A673 (cell line): ENCODE measurements at regions of chr4 and their contacts with region 1.

Region 1: DNA sequence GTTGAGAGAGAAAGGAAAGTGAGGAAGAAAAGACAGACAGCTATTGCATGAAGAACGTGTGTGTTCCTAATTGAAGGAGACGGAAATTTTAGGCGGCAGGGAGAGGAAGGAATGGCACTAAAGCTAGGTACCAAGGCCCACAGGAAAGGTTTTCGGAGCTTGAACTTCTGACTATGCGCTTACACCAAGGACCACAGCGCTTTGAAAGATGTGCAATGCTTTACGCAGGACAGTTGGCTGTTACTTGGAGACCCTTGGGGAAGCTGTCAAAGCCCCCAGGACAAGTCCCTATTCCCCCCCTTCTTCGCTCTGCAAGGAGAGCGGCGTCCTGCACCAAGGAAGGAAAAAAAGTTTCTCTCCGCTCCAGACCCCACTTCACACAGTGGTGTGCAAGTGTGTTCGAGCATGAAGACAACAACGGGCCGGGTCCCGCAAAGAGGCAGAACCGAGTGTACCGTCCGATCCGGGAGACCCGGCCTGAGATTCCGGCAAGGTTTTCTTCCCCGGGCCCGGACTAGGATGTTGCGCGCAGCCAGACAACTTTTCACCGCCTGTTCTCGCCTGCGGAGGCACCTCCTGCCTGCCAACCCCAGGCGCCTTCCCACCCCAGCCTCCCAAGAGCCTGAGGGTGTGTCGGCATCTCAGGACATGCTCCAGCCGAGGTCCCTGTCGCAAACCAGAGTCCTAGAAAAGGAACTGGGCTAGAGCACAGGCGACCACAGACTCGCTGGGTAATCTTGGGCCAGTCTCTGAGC is 896 bp downstream of the KDR start:
- DNase-seq: no peak
- H3K4me3 ChIP-seq: no peak overlapping the region
- H3K27ac ChIP-seq: no peak overlapping the region
- H3K4me1 ChIP-seq: no peaks in the 10 kb centered on the region
- H3K27me3 ChIP-seq: no peaks in the 10 kb centered on the region
- CTCF ChIP-seq: no peak

Region 2: DNA sequence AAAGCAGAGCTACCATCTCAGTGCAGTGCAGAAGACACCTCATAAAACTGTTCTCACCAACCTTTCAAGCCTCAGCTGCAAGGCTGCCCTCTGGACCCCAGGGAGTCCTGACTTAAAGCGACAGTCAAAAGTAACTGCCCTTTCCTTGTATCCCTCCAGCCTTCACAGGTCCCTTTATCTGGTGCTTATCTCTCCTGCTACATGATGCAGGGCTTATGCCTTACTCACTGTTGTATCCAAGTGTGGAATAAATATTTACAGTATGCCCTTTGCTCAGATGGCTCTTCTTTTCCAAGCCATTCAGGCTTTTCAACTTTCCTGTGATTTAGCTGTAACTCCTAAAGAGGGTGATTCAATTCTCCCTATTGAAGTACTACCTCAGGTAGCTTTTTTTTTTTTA is 91.7 kb before region 1 on chr4:
- CTCF ChIA-PET with region 1: no interaction called
- POLR2A ChIA-PET with region 1: no interaction called
- intact Hi-C with region 1: loop called (anchors 5 kb)
- DNase-seq: no peak
- H3K4me3 ChIP-seq: no peak overlapping the region
- H3K27ac ChIP-seq: no peak overlapping the region
- H3K4me1 ChIP-seq: peaks cover 16% of the 10 kb centered on the region
- H3K27me3 ChIP-seq: peaks cover 17% of the 10 kb centered on the region
- CTCF ChIP-seq: no peak

Region 3: GRCh38 chr4:55424791-55425190 is 300.3 kb after region 1 on chr4:
- CTCF ChIA-PET with region 1: no interaction called
- POLR2A ChIA-PET with region 1: no interaction called
- intact Hi-C with region 1: no loop called
- DNase-seq: no peak
- H3K4me3 ChIP-seq: no peak overlapping the region
- H3K27ac ChIP-seq: no peak overlapping the region
- H3K4me1 ChIP-seq: peaks cover 11% of the 10 kb centered on the region
- H3K27me3 ChIP-seq: no peaks in the 10 kb centered on the region
- CTCF ChIP-seq: no peak